ENCODE measurements at regions of chr17 and their contacts with region 1.

Region 1: GRCh38 chr17:78154903-78155811 is 9.0 kb downstream of the C17orf99 start:
- DNase-seq: no peak
- ATAC-seq: no peak
- H3K4me3 ChIP-seq: no peak overlapping the region
- H3K27ac ChIP-seq: no peak overlapping the region
- H3K4me1 ChIP-seq: no peaks in the 10 kb centered on the region
- H3K27me3 ChIP-seq: no peaks in the 10 kb centered on the region
- CTCF ChIP-seq: no peak

Region 2: GRCh38 chr17:78133971-78134898 is 20.9 kb before region 1 on chr17:
- CTCF ChIA-PET with region 1: no interaction called
- POLR2A ChIA-PET with region 1: no interaction called
- in situ Hi-C with region 1: no loop called
- intact Hi-C with region 1: no loop called
- DNase-seq: no peak
- ATAC-seq: peak; percentile 64
- H3K4me3 ChIP-seq: no peak overlapping the region
- H3K27ac ChIP-seq: no peak overlapping the region
- H3K4me1 ChIP-seq: peaks cover 13% of the 10 kb centered on the region
- H3K27me3 ChIP-seq: no peaks in the 10 kb centered on the region
- CTCF ChIP-seq: peak; percentile 87

Region 3: GRCh38 chr17:78412403-78412802 is 257.2 kb after region 1 on chr17:
- CTCF ChIA-PET with region 1: interaction called, 12 read pairs
- POLR2A ChIA-PET with region 1: no interaction called
- in situ Hi-C with region 1: no loop called
- intact Hi-C with region 1: no loop called
- DNase-seq: no peak
- ATAC-seq: peak; percentile 52; the same call in 1 of the 2 replicates
- H3K4me3 ChIP-seq: no peak overlapping the region
- H3K27ac ChIP-seq: no peak overlapping the region
- H3K4me1 ChIP-seq: 0 out of 2 replicates have a peak, but pooled peaks cover 5% of the 10 kb centered on the region
- H3K27me3 ChIP-seq: no peaks in the 10 kb centered on the region
- CTCF ChIP-seq: no peak; the same call in 1 of the 2 replicates

Measured in Panc1 (cell line).